ENCODE measurements at regions of chr16 and their contacts with region 1.

Region 1: GRCh38 chr16:82709987-82710386 is 83.2 kb downstream of the CDH13 start:
- DNase-seq: no peak
- CTCF ChIP-seq: no peak

Region 2: DNA sequence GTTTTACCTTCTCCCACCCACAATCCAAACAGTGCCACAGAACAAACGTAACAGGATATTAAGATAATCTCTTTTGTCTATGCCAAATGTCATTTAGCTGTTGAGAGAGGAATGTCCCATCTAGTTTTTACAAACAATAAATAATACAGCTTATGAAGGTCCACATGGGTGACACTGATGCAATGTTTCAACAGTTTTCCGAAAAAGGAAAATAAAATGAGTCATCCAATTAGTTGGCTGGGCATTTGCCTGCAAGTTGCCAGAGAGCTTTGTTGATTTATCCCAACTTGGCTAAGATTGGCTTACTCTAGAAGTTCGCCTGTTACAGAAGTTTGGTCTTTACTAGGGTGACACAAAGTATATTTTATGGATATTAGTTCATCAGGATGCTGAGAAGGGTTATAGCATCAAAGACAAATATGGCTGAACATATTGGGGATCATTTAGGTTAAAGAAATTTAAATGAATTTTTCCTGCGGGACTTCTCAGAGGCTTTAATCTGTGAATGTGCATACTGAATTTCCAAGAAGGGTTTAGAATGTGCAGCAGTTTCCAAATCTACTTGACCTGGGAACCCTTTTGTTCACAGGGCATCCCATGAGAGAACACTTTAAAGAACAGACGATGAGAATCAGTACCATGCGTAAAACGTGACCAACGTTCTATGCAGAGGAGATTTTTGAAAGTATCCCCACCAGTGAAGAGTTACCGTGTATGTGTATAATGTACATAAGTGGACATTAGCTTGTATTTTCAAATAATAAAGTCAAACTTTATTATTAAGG is 10.1 kb before region 1 on chr16:
- CTCF ChIA-PET with region 1: interaction called, 12 read pairs
- POLR2A ChIA-PET with region 1: no interaction called
- DNase-seq: no peak
- CTCF ChIP-seq: no peak

Region 3: GRCh38 chr16:82769845-82770244 is 59.9 kb after region 1 on chr16:
- CTCF ChIA-PET with region 1: no interaction called
- POLR2A ChIA-PET with region 1: no interaction called
- DNase-seq: no peak
- CTCF ChIP-seq: no peak

Measured in GM10248 (cell line).